ENCODE measurements at regions of chr6 and their contacts with region 1.

Region 1: DNA sequence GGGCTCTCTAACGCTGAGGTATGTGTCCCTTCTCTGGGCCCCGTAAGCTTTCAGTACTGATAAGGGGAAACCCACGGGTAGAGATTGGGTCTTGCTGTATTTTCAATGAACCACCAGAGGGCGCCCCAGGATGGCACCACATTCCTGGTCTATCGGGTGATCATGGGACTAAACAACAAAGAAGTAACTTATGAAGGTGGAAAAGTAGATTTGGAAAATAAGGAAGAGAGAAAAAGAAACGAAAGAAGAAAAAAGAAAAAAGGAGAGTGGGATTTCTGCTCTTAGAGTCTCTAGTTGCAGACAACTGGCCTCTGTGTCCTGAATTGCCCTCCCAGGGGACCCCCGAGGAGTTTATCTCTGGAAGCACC is 93.8 kb downstream of the GMPR start:
- DNase-seq: peak; percentile 90
- H3K4me3 ChIP-seq: no peak overlapping the region
- H3K27ac ChIP-seq: peak overlapping the region in 2 of 4 donors; percentile 30 to 83
- H3K4me1 ChIP-seq: peaks cover 0 to 54% (median 47%) of the 10 kb centered on the region in 4 donors
- H3K27me3 ChIP-seq: no peaks in the 10 kb centered on the region
- CTCF ChIP-seq: peak; percentile 72 to 92 (median 84)
- EP300 ChIP-seq: no peak
- POLR2A ChIP-seq: no peak

Region 2: GRCh38 chr6:16206595-16207037 is 125.5 kb before region 1 on chr6:
- intact Hi-C with region 1: no loop called
- DNase-seq: no peak
- H3K4me3 ChIP-seq: no peak overlapping the region
- H3K27ac ChIP-seq: no peak overlapping the region
- H3K4me1 ChIP-seq: no peaks in the 10 kb centered on the region
- H3K27me3 ChIP-seq: no peaks in the 10 kb centered on the region
- CTCF ChIP-seq: peak; percentile 71 to 97 (median 94)
- EP300 ChIP-seq: no peak
- POLR2A ChIP-seq: no peak

Region 3: DNA sequence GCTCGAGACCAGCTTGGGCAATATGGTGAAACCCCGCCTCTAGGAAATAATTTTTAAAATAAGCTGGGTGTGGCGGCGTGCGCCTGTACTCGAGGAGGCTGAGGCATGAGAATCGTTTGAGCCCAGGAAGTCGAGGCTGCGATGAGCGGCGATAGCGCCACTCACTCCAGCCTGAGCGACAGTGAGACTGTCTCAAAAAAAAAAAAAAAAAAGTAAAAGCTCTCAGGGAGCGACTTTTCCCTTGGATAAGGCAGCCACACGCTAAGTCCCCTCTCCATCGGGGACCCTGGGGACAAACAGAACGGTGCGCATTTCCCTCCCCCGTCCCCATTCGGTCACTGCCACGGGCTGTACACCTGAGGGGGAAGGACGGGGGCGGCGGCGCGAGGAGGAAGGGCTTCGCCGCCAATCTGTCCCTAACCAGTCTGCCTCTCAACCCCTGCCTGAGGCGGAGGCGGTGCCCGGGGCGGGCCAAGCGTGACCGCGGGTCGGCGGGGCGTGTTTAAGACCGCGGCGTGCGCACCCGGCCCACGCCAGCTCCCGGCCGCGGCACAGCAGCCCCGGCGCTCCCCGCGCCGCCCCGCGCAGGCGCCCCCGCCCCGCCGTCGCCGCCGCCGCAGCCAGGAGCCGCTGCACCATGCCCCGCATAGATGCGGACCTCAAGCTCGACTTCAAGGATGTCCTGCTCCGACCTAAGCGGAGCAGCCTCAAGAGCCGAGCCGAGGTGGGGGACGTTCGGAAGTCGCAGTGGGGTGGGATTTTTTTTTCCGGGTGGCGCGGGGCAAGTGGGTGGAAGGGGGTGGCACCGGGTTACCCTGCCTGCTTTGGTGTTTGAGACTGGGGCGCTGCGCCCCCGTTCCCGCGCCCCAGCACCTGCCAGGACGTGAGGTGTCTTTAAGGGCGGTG is 93.8 kb before region 1 on chr6 and contains the start of gene GMPR:
- intact Hi-C with region 1: loop called (anchors 5 kb)
- DNase-seq: peak; percentile 90
- H3K4me3 ChIP-seq: peak within 1 kb of the TSS; percentile 56 to 76 (median 63)
- H3K27ac ChIP-seq: peak within 1 kb of the TSS; percentile 81 to 87 (median 82)
- H3K4me1 ChIP-seq: peaks cover 0 to 59% (median 39%) of the 10 kb centered on the region in 4 donors
- H3K27me3 ChIP-seq: no peaks in the 10 kb centered on the region
- CTCF ChIP-seq: no peak
- EP300 ChIP-seq: no peak
- POLR2A ChIP-seq: peak in 1 of 2 donors; percentile 13
- total RNA-seq, gene GMPR: 15.0 to 26.5 (median 18.4) TPM

Region 4: GRCh38 chr6:16471222-16471909 is 139.2 kb after region 1 on chr6:
- intact Hi-C with region 1: no loop called
- DNase-seq: no peak
- H3K4me3 ChIP-seq: no peak overlapping the region
- H3K27ac ChIP-seq: no peak overlapping the region
- H3K4me1 ChIP-seq: peaks cover 0 to 24% (median 18%) of the 10 kb centered on the region in 4 donors
- H3K27me3 ChIP-seq: no peaks in the 10 kb centered on the region
- CTCF ChIP-seq: no peak
- EP300 ChIP-seq: no peak
- POLR2A ChIP-seq: no peak

Region 5: GRCh38 chr6:16514249-16514648 is 182.1 kb after region 1 on chr6:
- intact Hi-C with region 1: loop called (anchors 5 kb)
- DNase-seq: no peak
- H3K4me3 ChIP-seq: no peak overlapping the region
- H3K27ac ChIP-seq: no peak overlapping the region
- H3K4me1 ChIP-seq: peaks cover 0 to 35% (median 27%) of the 10 kb centered on the region in 4 donors
- H3K27me3 ChIP-seq: no peaks in the 10 kb centered on the region
- CTCF ChIP-seq: peak in 1 of 4 experiments; percentile 37
- EP300 ChIP-seq: no peak
- POLR2A ChIP-seq: no peak

Region 6: GRCh38 chr6:16770701-16771569 is 438.8 kb after region 1 on chr6:
- intact Hi-C with region 1: loop called (anchors 2 kb)
- DNase-seq: peak; percentile 92
- H3K4me3 ChIP-seq: no peak overlapping the region
- H3K27ac ChIP-seq: peak overlapping the region; percentile 64 to 99 (median 86)
- H3K4me1 ChIP-seq: peaks cover 0 to 53% (median 50%) of the 10 kb centered on the region in 4 donors
- H3K27me3 ChIP-seq: no peaks in the 10 kb centered on the region
- CTCF ChIP-seq: peak; percentile 73 to 87 (median 84)
- EP300 ChIP-seq: peak in 1 of 4 donors; percentile 88
- POLR2A ChIP-seq: no peak

Region 7: DNA sequence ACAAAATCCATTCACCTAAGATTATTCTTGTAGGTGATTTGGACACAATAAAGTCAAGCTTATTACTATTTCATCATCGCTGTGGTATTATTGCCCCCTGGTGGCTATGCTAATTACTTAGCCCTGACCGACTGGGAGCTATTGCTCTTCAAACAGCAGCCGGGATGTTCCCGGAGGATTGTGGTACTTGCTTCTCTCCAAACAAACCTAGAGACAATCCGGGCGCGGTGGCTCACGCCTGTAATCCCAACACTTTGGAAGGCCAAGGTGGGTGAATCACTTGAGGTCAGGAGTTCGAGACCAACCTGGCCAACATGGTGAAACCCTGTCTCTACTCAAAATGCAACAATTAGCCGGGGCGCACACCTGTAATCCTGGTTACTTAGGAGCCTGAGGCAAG is 754.3 kb after region 1 on chr6:
- intact Hi-C with region 1: loop called (anchors 5 kb)
- DNase-seq: peak; percentile 71
- H3K4me3 ChIP-seq: no peak overlapping the region
- H3K27ac ChIP-seq: peak overlapping the region in 1 of 4 donors; percentile 11
- H3K4me1 ChIP-seq: peaks cover 0 to 12% (median 8%) of the 10 kb centered on the region in 4 donors
- H3K27me3 ChIP-seq: no peaks in the 10 kb centered on the region
- CTCF ChIP-seq: peak; percentile 61 to 66 (median 62)
- EP300 ChIP-seq: no peak
- POLR2A ChIP-seq: no peak

Measured in sigmoid colon (tissue), 7 donors.